ENCODE measurements at regions of chr1 and their contacts with region 1.

Region 1: DNA sequence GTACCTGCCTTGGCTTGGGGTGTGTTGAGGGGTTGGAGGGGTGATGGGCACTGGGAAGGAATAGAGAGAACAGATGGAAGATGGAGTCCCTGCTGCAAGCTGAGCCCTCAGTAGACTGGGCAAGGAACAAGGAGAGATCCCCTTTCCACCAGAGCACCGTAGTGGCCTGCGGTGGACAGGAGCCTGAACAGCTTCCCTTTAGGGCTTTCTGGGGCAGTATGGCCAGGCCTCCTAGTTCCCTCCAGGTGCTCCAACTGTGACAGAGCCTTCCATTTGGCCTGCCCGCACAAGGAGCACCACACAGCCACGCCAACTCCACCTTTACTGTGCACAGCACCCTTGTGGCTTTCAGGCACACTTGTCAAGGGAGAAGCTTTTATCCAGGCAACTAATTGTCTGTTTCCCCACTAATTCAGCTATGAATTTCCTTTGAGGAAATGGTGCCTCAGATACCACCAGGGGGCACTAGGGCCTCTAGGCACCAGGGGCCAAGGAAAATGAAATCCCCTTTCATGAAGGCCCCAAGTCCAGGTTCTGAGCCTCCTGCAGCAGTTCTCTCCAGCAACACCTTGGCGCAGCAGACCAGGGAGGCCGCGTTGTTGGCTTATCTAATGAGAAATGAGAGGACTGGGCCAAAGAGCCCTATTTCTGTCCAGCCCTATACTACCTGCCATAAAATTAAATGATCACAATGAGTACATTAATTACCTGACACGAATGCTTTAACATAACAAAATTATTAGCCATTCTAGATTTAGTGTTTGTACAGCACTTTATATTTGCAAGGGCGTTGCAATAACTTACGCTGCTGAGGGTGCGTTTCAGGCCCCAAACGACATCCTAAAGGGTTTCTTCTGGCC is 23.1 kb upstream of the ERI3 start:
- DNase-seq: peak in 4 of 6 donors; percentile 11 to 59 (median 38)
- ATAC-seq: peak in 3 of 4 donors; percentile 70 to 82 (median 74)
- H3K4me3 ChIP-seq: no peak overlapping the region
- H3K27ac ChIP-seq: no peak overlapping the region
- H3K4me1 ChIP-seq: no peaks in the 10 kb centered on the region
- H3K27me3 ChIP-seq: no peaks in the 10 kb centered on the region
- CTCF ChIP-seq: peak; percentile 43 to 57 (median 48)

Region 2: DNA sequence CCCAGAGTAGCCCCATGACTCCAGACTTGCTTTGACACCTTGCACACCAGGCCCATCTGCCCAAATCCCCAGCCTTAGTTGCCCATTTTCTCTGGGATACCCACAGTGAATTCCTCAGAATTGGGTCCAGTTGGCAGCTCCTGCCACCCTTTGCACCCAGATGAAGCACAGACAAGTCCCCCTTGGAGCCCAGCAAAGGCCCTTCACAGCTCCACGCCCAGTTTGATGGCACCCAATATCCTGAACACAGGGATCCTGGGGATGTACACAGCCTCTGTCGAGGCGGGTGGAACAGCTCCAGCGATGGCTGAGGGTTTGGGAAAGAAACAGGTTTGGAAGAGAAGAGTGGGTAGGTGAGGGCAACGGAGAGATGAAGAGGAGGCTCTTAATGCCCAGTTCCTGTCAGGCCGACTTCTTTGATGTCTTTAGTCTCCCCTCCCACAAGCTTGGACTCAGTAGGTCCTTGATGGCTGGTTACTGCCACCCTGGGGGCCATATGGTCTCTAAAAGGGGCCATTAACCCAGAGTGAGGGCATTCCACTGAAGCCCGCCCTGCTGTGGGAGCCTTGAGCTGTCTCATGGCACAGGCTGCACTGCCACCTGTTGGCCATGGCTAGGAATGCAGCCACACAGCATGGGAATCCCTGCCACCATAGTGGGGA is 274.4 kb after region 1 on chr1:
- intact Hi-C with region 1: loop called in 1 of 3 experiments (anchors 1 kb)
- DNase-seq: peak; percentile 58 to 94 (median 82)
- ATAC-seq: peak; percentile 83 to 97 (median 93)
- H3K4me3 ChIP-seq: no peak overlapping the region
- H3K27ac ChIP-seq: no peak overlapping the region
- H3K4me1 ChIP-seq: no peaks in the 10 kb centered on the region
- H3K27me3 ChIP-seq: no peaks in the 10 kb centered on the region
- CTCF ChIP-seq: peak; percentile 92 to 94 (median 94)